Naive thymus-derived CD4-positive, alpha-beta T cell (primary cell): ENCODE measurements at regions of chr21 and their contacts with region 1.

Region 1: GRCh38 chr21:28943631-28944030 is 49.0 kb downstream of the LTN1 start:
- DNase-seq: no peak
- ATAC-seq: no peak
- H3K4me3 ChIP-seq: no peak overlapping the region
- H3K4me3 Mint-ChIP-seq: no peak overlapping the region
- H3K27ac ChIP-seq: no peak overlapping the region
- H3K27ac Mint-ChIP-seq: peak overlapping the region in 1 of 9 donors; percentile 15
- H3K4me1 ChIP-seq: no peaks in the 10 kb centered on the region
- H3K4me1 Mint-ChIP-seq: peaks cover 0 to 9% (median 0%) of the 10 kb centered on the region in 7 donors
- H3K27me3 ChIP-seq: no peaks in the 10 kb centered on the region
- H3K27me3 Mint-ChIP-seq: no peaks in the 10 kb centered on the region

Region 2: GRCh38 chr21:28745131-28746016 is 198.3 kb before region 1 on chr21:
- CTCF ChIA-PET with region 1: interaction called, 21 read pairs
- POLR2A ChIA-PET with region 1: no interaction called
- intact Hi-C with region 1: loop called (anchors 1 kb)
- DNase-seq: peak; percentile 31 to 69 (median 60)
- ATAC-seq: peak; percentile 91
- H3K4me3 ChIP-seq: peak overlapping the region; percentile 49
- H3K4me3 Mint-ChIP-seq: no peak overlapping the region
- H3K27ac ChIP-seq: no peak overlapping the region
- H3K27ac Mint-ChIP-seq: no peak overlapping the region
- H3K4me1 ChIP-seq: peaks cover 0 to 3% of the 10 kb centered on the region in 2 donors
- H3K4me1 Mint-ChIP-seq: no peaks in the 10 kb centered on the region
- H3K27me3 ChIP-seq: no peaks in the 10 kb centered on the region
- H3K27me3 Mint-ChIP-seq: peaks cover 0 to 5% (median 0%) of the 10 kb centered on the region in 5 donors

Region 3: GRCh38 chr21:28832013-28832714 is 111.5 kb before region 1 on chr21:
- CTCF ChIA-PET with region 1: no interaction called
- POLR2A ChIA-PET with region 1: no interaction called
- intact Hi-C with region 1: loop called in 1 of 2 experiments (anchors 5 kb)
- DNase-seq: peak in 6 of 9 donors; percentile 29 to 64 (median 52)
- ATAC-seq: peak; percentile 91
- H3K4me3 ChIP-seq: peak overlapping the region; percentile 21
- H3K4me3 Mint-ChIP-seq: peak overlapping the region; percentile 12 to 75 (median 68)
- H3K27ac ChIP-seq: no peak overlapping the region
- H3K27ac Mint-ChIP-seq: peak overlapping the region; percentile 2 to 97 (median 68)
- H3K4me1 ChIP-seq: peaks cover 52 to 56% of the 10 kb centered on the region in 2 donors
- H3K4me1 Mint-ChIP-seq: peaks cover 46 to 82% (median 76%) of the 10 kb centered on the region in 7 donors
- H3K27me3 ChIP-seq: no peaks in the 10 kb centered on the region
- H3K27me3 Mint-ChIP-seq: no peaks in the 10 kb centered on the region

Region 4: GRCh38 chr21:28992526-28993292 is 49.1 kb after region 1 on chr21 and contains the start of gene LTN1:
- CTCF ChIA-PET with region 1: no interaction called
- POLR2A ChIA-PET with region 1: no interaction called
- intact Hi-C with region 1: no loop called
- DNase-seq: peak; percentile 91 to 99 (median 98)
- ATAC-seq: peak; percentile 98
- H3K4me3 ChIP-seq: peak within 1 kb of the TSS; percentile 86
- H3K4me3 Mint-ChIP-seq: peak within 1 kb of the TSS; percentile 89 to 99 (median 94)
- H3K27ac ChIP-seq: peak within 1 kb of the TSS; percentile 87
- H3K27ac Mint-ChIP-seq: peak within 1 kb of the TSS; percentile 94 to 99 (median 98)
- H3K4me1 ChIP-seq: peaks cover 11 to 23% of the 10 kb centered on the region in 2 donors
- H3K4me1 Mint-ChIP-seq: peaks cover 26 to 58% (median 42%) of the 10 kb centered on the region in 7 donors
- H3K27me3 ChIP-seq: no peaks in the 10 kb centered on the region
- H3K27me3 Mint-ChIP-seq: no peaks in the 10 kb centered on the region
- total RNA-seq, gene LTN1: 27.3 to 36.3 (median 31.3) TPM

Region 5: GRCh38 chr21:29073222-29074006 is 129.8 kb after region 1 on chr21 and contains the start of gene CCT8:
- CTCF ChIA-PET with region 1: no interaction called
- POLR2A ChIA-PET with region 1: no interaction called
- intact Hi-C with region 1: no loop called
- DNase-seq: peak; percentile 93 to 100 (median 98)
- ATAC-seq: peak; percentile 96
- H3K4me3 ChIP-seq: peak within 1 kb of the TSS; percentile 80
- H3K4me3 Mint-ChIP-seq: peak within 1 kb of the TSS; percentile 98 to 100 (median 99)
- H3K27ac ChIP-seq: peak within 1 kb of the TSS; percentile 88
- H3K27ac Mint-ChIP-seq: peak within 1 kb of the TSS; percentile 97 to 100 (median 99)
- H3K4me1 ChIP-seq: peaks cover 24 to 25% of the 10 kb centered on the region in 2 donors
- H3K4me1 Mint-ChIP-seq: peaks cover 19 to 78% (median 67%) of the 10 kb centered on the region in 7 donors
- H3K27me3 ChIP-seq: no peaks in the 10 kb centered on the region
- H3K27me3 Mint-ChIP-seq: no peaks in the 10 kb centered on the region
- total RNA-seq, gene CCT8: 87.6 to 223 (median 126) TPM